AG04450 (cell line): ENCODE measurements at regions of chr3 and their contacts with region 1.

Region 1: DNA sequence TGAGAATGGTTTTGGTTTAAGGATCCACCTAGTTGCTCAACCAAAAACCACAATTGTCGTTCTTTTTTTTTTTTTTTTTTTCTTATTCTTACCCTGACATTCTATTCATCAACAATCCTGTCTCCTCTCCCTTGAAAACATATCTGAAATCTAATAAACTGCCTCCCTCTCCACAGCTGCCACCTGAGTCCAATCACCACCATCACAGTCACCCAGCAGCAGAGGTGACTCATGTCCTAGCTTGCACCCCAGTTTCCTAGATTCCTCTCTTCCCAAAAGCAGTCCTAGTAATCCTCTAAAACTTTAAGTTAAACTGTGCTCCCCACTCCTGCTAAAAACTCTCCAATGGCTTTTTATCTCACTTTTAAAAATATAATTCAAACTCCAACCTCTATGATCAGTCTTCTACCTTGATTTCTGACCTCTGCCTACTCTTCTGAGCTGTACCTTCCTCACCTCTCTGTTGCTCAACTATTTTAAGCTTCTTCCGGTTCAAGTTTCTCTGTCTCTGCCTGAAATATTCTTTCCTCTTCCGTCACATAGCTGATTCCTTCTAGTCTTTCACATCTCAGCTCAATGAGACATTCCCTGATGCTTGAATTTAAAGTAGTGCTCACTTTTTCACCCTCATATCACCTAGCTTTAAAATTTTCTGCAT is 33.7 kb upstream of the RBMS3 start:
- DNase-seq: no peak
- H3K4me3 ChIP-seq: no peak overlapping the region
- H3K27ac ChIP-seq: no peak overlapping the region
- H3K27me3 ChIP-seq: no peaks in the 10 kb centered on the region
- CTCF ChIP-seq: no peak

Region 2: GRCh38 chr3:29091599-29092189 is 155.5 kb before region 1 on chr3:
- CTCF ChIA-PET with region 1: interaction called, 10 read pairs
- POLR2A ChIA-PET with region 1: no interaction called
- DNase-seq: no peak
- H3K4me3 ChIP-seq: no peak overlapping the region
- H3K27ac ChIP-seq: no peak overlapping the region
- H3K27me3 ChIP-seq: no peaks in the 10 kb centered on the region
- CTCF ChIP-seq: no peak

Region 3: DNA sequence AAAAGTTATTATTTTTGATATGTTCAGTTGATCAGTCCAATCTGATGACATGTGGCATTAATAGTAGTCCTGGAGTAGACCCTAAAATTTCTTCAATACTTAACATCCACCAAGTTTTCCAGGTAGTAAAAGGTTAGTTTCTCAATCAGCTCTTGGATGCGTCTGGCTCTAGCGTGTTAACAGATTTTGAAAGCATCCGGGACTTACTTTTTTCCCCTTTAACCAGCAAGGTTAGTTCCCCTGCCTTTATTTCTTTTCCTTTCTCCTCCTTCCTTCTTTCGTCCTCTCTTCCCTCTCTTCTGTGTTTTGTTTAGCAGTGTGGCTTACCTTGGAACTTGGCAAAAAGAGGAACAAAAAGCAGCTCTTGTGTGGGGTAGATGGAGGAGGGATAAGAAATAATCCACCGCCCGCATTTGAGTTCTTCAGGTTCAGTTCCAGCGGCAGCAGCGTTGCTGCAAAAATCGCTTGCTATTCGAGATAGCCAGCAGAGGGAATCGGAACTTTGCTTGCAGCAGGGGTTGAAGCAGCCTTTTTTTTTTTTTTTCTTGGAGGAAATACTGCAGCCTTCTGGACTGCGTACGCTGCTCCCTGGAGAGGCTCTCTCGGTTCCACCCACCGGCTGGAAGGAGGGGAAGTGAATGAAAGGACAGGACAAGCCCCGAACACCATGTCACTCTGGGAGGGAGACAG is 33.3 kb after region 1 on chr3 and contains the start of gene RBMS3:
- CTCF ChIA-PET with region 1: no interaction called
- POLR2A ChIA-PET with region 1: no interaction called
- DNase-seq: peak; percentile 91
- H3K4me3 ChIP-seq: peak within 1 kb of the TSS; percentile 81
- H3K27ac ChIP-seq: peak within 1 kb of the TSS; percentile 93
- H3K27me3 ChIP-seq: no peaks in the 10 kb centered on the region
- CTCF ChIP-seq: peak; percentile 72
- polyA plus RNA-seq, gene RBMS3: 32.0 and 33.4 TPM in 2 replicates